PC-9 (cell line): ENCODE measurements at regions of chr6 and their contacts with region 1.

Region 1: GRCh38 chr6:25829375-25829774 is 2.5 kb downstream of the SLC17A1 start:
- DNase-seq: no peak
- H3K4me3 ChIP-seq: no peak overlapping the region
- H3K27ac ChIP-seq: no peak overlapping the region
- H3K4me1 ChIP-seq: no peaks in the 10 kb centered on the region
- H3K27me3 ChIP-seq: no peaks in the 10 kb centered on the region
- CTCF ChIP-seq: no peak

Region 2: GRCh38 chr6:24809728-24810127 is 1019.6 kb before region 1 on chr6:
- CTCF ChIA-PET with region 1: interaction called, 10 read pairs
- POLR2A ChIA-PET with region 1: no interaction called
- intact Hi-C with region 1: no loop called
- DNase-seq: no peak
- H3K4me3 ChIP-seq: no peak overlapping the region
- H3K27ac ChIP-seq: no peak overlapping the region
- H3K4me1 ChIP-seq: no peaks in the 10 kb centered on the region
- H3K27me3 ChIP-seq: no peaks in the 10 kb centered on the region
- CTCF ChIP-seq: no peak

Region 3: GRCh38 chr6:25944688-25945574 is 115.6 kb after region 1 on chr6:
- CTCF ChIA-PET with region 1: no interaction called
- POLR2A ChIA-PET with region 1: no interaction called
- intact Hi-C with region 1: no loop called
- DNase-seq: no peak
- H3K4me3 ChIP-seq: no peak overlapping the region
- H3K27ac ChIP-seq: no peak overlapping the region
- H3K4me1 ChIP-seq: no peaks in the 10 kb centered on the region
- H3K27me3 ChIP-seq: no peaks in the 10 kb centered on the region
- CTCF ChIP-seq: no peak